HEK293T (cell line): ENCODE measurements at regions of chr7 and their contacts with region 1.

Region 1: GRCh38 chr7:148262721-148263229 is 327.8 kb upstream of the C7orf33 start:
- DNase-seq: peak; percentile 88

Region 2: GRCh38 chr7:148021507-148022045 is 241.2 kb before region 1 on chr7:
- CTCF ChIA-PET with region 1: no interaction called
- POLR2A ChIA-PET with region 1: no interaction called
- DNase-seq: no peak

Region 3: DNA sequence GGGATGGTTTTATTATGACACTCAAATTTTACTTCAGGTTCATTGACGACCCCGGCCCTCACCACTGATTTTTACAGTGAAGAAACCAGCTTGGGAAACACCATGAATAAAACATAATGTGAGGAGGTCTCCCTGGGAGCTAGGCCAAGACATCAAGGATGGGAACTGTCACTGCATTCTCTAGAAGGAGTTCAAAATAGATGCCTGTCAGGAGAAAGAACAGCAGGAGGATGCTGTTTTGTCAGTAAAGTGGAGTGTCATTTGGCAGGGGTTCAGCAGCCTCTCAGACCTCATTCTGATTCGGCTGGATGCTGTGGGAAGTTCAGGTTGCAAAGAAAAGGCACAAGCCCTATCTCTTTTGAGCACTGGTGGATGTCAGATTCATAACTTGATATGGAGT is 32.5 kb before region 1 on chr7:
- CTCF ChIA-PET with region 1: no interaction called
- POLR2A ChIA-PET with region 1: no interaction called
- DNase-seq: no peak

Region 4: DNA sequence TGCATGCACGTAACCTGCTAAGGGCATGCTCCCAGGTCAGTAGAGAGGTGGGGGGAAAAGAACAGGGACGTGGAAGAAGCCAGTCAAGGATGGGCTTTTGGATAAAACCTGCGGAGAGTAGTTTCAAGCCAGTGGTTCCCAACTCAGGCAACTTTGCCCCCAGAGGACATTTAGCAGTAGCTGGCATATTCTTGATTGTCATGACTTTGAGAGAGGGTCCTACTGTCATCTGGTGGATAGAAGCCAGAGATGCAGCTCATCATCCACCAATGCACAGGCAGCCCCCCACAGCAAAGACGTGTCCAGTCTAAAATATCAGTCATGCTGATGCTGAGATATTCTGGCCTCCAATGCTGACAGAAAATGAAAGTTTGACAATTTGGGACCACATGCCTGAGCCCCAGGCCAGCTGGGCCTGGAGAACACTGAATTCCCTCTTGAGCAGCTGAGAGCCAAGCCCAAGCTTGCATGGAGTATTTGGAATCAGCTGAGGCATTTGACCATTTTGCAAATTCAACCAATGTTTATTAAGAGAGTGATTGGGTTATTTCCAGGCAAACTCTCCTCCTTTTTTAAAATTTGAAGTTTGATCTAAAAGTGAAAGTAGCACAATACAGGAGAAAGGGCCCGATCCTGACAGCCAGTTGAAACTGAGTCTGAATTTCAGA is 217.8 kb after region 1 on chr7:
- CTCF ChIA-PET with region 1: interaction called, 39 read pairs
- POLR2A ChIA-PET with region 1: interaction called, 3 read pairs
- DNase-seq: no peak

Region 5: GRCh38 chr7:148485618-148486017 is 222.8 kb after region 1 on chr7:
- CTCF ChIA-PET with region 1: interaction called, 39 read pairs
- POLR2A ChIA-PET with region 1: interaction called, 3 read pairs
- DNase-seq: peak; percentile 45